Left colon (tissue), 2 donors: ENCODE measurements at regions of chr12 and their contacts with region 1.

Region 1: DNA sequence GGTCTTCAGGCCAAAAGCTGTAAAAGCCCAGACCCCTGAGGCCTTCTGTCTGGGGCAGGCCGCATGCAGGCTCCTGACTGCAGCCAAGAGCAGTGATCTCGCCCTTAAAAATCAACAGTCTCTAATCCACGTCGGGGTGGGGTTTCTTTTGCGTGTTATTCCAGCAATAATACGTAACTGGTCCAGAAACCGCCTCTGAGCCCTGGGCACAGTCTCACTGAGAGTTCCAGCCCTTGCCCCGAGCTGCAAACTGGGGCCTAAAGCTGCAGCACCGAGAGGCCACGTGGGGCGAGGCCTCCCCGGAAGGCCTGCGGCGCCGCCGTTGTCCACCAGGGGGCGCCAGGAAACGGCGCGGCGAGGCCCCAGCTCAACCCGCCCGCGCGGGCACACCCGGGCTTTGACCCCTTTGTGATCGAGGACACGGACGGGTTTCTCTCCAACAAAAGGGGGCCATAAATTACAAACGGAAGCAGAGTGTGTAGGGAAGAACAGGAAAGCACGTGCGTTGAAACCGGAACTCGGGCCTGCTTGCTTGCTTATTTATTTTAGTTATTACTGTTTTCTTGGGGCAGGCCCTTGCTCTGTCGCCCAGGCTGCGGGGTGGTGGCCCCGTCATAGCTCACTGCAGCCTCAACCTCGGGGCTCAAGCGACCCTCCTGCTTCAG is 87.2 kb downstream of the NINJ2 start:
- DNase-seq: peak; percentile 70 to 82
- ATAC-seq: peak; percentile 80

Region 2: GRCh38 chr12:642633-643474 is 66.8 kb after region 1 on chr12:
- intact Hi-C with region 1: loop called in 1 of 2 experiments (anchors 10 kb)
- DNase-seq: peak; percentile 81 to 87
- ATAC-seq: peak; percentile 86

Region 3: DNA sequence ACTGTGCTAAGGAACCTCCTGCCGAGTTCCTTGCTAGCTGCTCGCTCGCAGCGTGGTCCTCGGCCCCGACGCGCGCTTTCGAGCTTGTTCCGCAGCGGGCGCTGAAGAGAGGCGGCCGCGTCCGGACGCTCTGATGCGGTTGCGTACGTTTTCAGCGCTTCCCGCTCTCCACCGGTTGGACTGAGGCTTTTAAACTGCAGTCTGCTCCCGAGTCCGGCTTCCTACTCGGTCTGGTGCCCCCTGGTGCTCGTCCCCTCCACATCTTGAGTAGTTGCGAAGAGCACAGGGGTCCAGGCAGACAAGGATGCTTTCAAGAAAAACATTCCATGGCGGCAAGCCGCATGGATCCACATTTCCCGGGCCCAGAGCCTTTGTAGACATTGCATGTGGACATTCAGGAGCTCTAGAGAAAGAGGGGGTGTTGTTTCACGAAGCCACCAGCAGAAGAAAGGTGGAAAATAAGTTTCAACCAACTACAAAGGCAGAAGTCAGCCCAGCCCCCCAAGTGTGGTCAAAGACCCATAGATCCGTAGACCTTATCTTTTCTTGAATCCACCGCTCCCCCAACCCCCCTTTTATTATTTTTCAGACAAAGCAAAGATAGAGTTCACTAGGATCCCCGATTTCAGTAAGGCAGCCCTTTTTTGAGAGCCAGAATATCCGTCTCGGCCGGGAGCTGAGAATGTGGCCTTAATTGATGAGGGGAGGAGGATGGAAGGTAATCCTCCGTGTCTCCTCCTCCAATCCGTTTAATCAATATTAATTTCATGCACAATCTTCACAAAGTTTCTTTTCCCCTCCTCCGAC is 175.3 kb after region 1 on chr12:
- intact Hi-C with region 1: loop called in 1 of 2 experiments (anchors 10 kb)
- DNase-seq: peak; percentile 90 to 93
- ATAC-seq: peak; percentile 58

Region 4: DNA sequence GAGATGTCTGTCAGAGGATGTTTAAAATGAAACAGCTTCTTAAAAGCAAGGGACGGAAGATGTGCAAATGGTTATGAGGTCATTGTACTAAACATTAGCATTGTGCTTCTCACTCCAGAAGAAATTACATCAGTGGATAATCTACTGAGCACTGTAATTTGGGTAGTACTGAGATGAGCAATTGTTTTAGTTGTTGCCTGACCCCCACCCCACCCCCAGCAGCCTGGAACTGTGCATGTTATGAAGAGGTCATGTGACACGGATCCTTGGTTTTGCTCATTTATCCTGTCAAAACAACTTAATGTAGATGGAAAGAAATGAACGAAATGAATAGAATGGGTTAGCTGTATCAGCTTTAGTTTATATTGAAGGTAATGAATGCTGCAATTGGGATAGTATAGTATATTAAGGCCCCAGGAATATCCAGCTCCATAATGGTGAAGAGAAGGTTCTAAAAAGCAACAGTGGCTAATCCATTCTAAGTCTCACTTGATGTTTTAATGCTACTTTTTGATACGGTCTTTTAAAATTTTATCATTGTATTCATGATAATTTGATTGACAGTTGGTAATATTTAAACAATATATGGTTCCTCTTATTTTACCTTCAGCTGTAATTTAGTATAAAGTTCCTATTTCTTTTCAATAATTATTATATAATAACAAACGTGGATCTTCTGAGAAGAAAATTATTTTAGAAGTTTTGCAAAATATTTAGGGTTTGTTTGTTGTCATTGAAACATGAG is 234.8 kb after region 1 on chr12:
- intact Hi-C with region 1: loop called (anchors 5 to 10 kb)
- DNase-seq: no peak
- ATAC-seq: no peak